B cell (primary cell): ENCODE measurements at regions of chr7 and their contacts with region 1.

Region 1: GRCh38 chr7:139075031-139075652 is 34.4 kb downstream of the ZC3HAV1 start:
- DNase-seq: peak; percentile 84
- ATAC-seq: peak; percentile 86
- H3K4me3 ChIP-seq: no peak overlapping the region
- H3K4me3 Mint-ChIP-seq: no peak overlapping the region
- H3K27ac ChIP-seq: peak overlapping the region; percentile 15 to 85
- H3K27ac Mint-ChIP-seq: peak overlapping the region; percentile 15
- H3K4me1 ChIP-seq: peaks cover 4 to 7% of the 10 kb centered on the region in 2 donors
- H3K4me1 Mint-ChIP-seq: peaks cover 17% of the 10 kb centered on the region
- H3K27me3 ChIP-seq: no peaks in the 10 kb centered on the region
- H3K27me3 Mint-ChIP-seq: no peaks in the 10 kb centered on the region
- CTCF ChIP-seq: peak; percentile 82

Region 2: DNA sequence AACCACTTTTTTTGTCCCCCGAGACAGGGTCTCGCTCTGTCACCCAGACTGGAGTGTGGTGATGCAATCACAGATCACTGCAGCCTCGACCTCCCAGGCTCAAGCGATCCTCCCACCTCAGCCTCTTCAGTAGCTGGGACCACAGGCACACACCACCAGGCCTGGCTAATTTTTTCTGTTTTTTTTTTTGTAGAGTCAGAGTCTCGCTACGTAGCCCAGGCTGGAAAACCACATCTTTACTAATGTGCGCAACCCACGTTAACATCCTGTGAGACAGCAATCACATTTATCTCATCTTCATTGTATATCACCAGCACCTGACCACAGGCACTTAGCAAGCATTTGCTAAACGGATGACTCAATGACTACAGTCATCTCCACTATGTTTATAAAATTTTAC is 199.3 kb before region 1 on chr7:
- CTCF ChIA-PET with region 1: no interaction called
- POLR2A ChIA-PET with region 1: no interaction called
- intact Hi-C with region 1: no loop called
- DNase-seq: no peak
- ATAC-seq: no peak
- H3K4me3 ChIP-seq: no peak overlapping the region
- H3K4me3 Mint-ChIP-seq: no peak overlapping the region
- H3K27ac ChIP-seq: no peak overlapping the region
- H3K27ac Mint-ChIP-seq: no peak overlapping the region
- H3K4me1 ChIP-seq: no peaks in the 10 kb centered on the region
- H3K4me1 Mint-ChIP-seq: no peaks in the 10 kb centered on the region
- H3K27me3 ChIP-seq: no peaks in the 10 kb centered on the region
- H3K27me3 Mint-ChIP-seq: no peaks in the 10 kb centered on the region
- CTCF ChIP-seq: no peak

Region 3: GRCh38 chr7:138886501-138886917 is 188.6 kb before region 1 on chr7:
- CTCF ChIA-PET with region 1: interaction called, 17 read pairs
- POLR2A ChIA-PET with region 1: no interaction called
- intact Hi-C with region 1: no loop called
- DNase-seq: peak; percentile 74
- ATAC-seq: peak; percentile 81
- H3K4me3 ChIP-seq: no peak overlapping the region
- H3K4me3 Mint-ChIP-seq: no peak overlapping the region
- H3K27ac ChIP-seq: no peak overlapping the region
- H3K27ac Mint-ChIP-seq: peak overlapping the region; percentile 22
- H3K4me1 ChIP-seq: peaks cover 0 to 4% of the 10 kb centered on the region in 2 donors
- H3K4me1 Mint-ChIP-seq: peaks cover 5% of the 10 kb centered on the region
- H3K27me3 ChIP-seq: no peaks in the 10 kb centered on the region
- H3K27me3 Mint-ChIP-seq: peaks cover 2% of the 10 kb centered on the region
- CTCF ChIP-seq: peak; percentile 75

Region 4: GRCh38 chr7:139058943-139059342 is 16.2 kb before region 1 on chr7:
- CTCF ChIA-PET with region 1: interaction called, 24 read pairs
- POLR2A ChIA-PET with region 1: no interaction called
- intact Hi-C with region 1: no loop called
- DNase-seq: no peak
- ATAC-seq: no peak
- H3K4me3 ChIP-seq: no peak overlapping the region
- H3K4me3 Mint-ChIP-seq: no peak overlapping the region
- H3K27ac ChIP-seq: no peak overlapping the region
- H3K27ac Mint-ChIP-seq: peak overlapping the region; percentile 22
- H3K4me1 ChIP-seq: no peaks in the 10 kb centered on the region
- H3K4me1 Mint-ChIP-seq: peaks cover 4% of the 10 kb centered on the region
- H3K27me3 ChIP-seq: no peaks in the 10 kb centered on the region
- H3K27me3 Mint-ChIP-seq: no peaks in the 10 kb centered on the region
- CTCF ChIP-seq: no peak

Region 5: GRCh38 chr7:139095194-139095659 is 20.1 kb after region 1 on chr7:
- CTCF ChIA-PET with region 1: interaction called, 40 read pairs
- POLR2A ChIA-PET with region 1: no interaction called
- intact Hi-C with region 1: no loop called
- DNase-seq: peak; percentile 93
- ATAC-seq: peak; percentile 97
- H3K4me3 ChIP-seq: peak overlapping the region; percentile 14 to 54 (median 35)
- H3K4me3 Mint-ChIP-seq: peak overlapping the region; percentile 83
- H3K27ac ChIP-seq: peak overlapping the region; percentile 75 to 98
- H3K27ac Mint-ChIP-seq: peak overlapping the region; percentile 91
- H3K4me1 ChIP-seq: peaks cover 66 to 67% of the 10 kb centered on the region in 2 donors
- H3K4me1 Mint-ChIP-seq: peaks cover 74% of the 10 kb centered on the region
- H3K27me3 ChIP-seq: no peaks in the 10 kb centered on the region
- H3K27me3 Mint-ChIP-seq: no peaks in the 10 kb centered on the region
- CTCF ChIP-seq: peak; percentile 31

Region 6: GRCh38 chr7:139109188-139109982 is 34.2 kb after region 1 on chr7 and contains the start of gene ZC3HAV1:
- CTCF ChIA-PET with region 1: interaction called, 14 read pairs
- POLR2A ChIA-PET with region 1: no interaction called
- intact Hi-C with region 1: loop called (anchors 1 kb)
- DNase-seq: peak; percentile 94
- ATAC-seq: peak; percentile 78
- H3K4me3 ChIP-seq: peak within 1 kb of the TSS; percentile 85 to 98 (median 95)
- H3K4me3 Mint-ChIP-seq: peak within 1 kb of the TSS; percentile 88
- H3K27ac ChIP-seq: peak within 1 kb of the TSS; percentile 90 to 96
- H3K27ac Mint-ChIP-seq: peak within 1 kb of the TSS; percentile 99
- H3K4me1 ChIP-seq: peaks cover 18 to 26% of the 10 kb centered on the region in 2 donors
- H3K4me1 Mint-ChIP-seq: peaks cover 34% of the 10 kb centered on the region
- H3K27me3 ChIP-seq: no peaks in the 10 kb centered on the region
- H3K27me3 Mint-ChIP-seq: no peaks in the 10 kb centered on the region
- CTCF ChIP-seq: no peak
- total RNA-seq, gene ZC3HAV1: 101 TPM in 2 replicates

Region 7: GRCh38 chr7:139124084-139124914 is 49.2 kb after region 1 on chr7:
- CTCF ChIA-PET with region 1: interaction called, 38 read pairs
- POLR2A ChIA-PET with region 1: interaction called, 3 read pairs
- intact Hi-C with region 1: loop called (anchors 1 kb)
- DNase-seq: no peak
- ATAC-seq: peak; percentile 31
- H3K4me3 ChIP-seq: no peak overlapping the region
- H3K4me3 Mint-ChIP-seq: no peak overlapping the region
- H3K27ac ChIP-seq: no peak overlapping the region
- H3K27ac Mint-ChIP-seq: no peak overlapping the region
- H3K4me1 ChIP-seq: peaks cover 21 to 28% of the 10 kb centered on the region in 2 donors
- H3K4me1 Mint-ChIP-seq: peaks cover 38% of the 10 kb centered on the region
- H3K27me3 ChIP-seq: no peaks in the 10 kb centered on the region
- H3K27me3 Mint-ChIP-seq: no peaks in the 10 kb centered on the region
- CTCF ChIP-seq: no peak

Region 8: GRCh38 chr7:139242741-139243281 is 167.7 kb after region 1 on chr7:
- CTCF ChIA-PET with region 1: no interaction called
- POLR2A ChIA-PET with region 1: no interaction called
- intact Hi-C with region 1: no loop called
- DNase-seq: no peak
- ATAC-seq: no peak
- H3K4me3 ChIP-seq: no peak overlapping the region
- H3K4me3 Mint-ChIP-seq: no peak overlapping the region
- H3K27ac ChIP-seq: no peak overlapping the region
- H3K27ac Mint-ChIP-seq: no peak overlapping the region
- H3K4me1 ChIP-seq: no peaks in the 10 kb centered on the region
- H3K4me1 Mint-ChIP-seq: no peaks in the 10 kb centered on the region
- H3K27me3 ChIP-seq: no peaks in the 10 kb centered on the region
- H3K27me3 Mint-ChIP-seq: no peaks in the 10 kb centered on the region
- CTCF ChIP-seq: no peak

Region 9: DNA sequence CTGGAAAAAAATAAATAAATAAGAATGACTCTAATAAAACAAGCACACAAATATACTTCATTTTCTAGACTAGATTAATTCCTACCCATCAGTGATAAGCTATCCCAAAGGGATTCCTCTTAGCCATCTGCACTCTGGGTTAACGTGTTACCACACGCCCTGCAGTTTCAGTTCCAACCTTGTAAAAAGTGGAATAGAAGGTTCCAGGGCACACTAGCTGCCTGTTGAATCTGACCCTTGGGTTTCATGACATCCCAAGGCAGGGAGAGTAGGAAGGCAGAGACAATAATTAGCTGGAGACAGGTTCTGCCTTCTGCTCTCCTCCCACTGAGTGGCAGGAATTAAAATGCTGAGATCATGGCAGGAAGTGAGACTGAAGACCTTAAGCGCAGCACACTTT is 1289.7 kb after region 1 on chr7:
- CTCF ChIA-PET with region 1: no interaction called
- POLR2A ChIA-PET with region 1: interaction called, 17 read pairs
- intact Hi-C with region 1: no loop called
- DNase-seq: no peak
- ATAC-seq: no peak
- H3K4me3 ChIP-seq: no peak overlapping the region
- H3K4me3 Mint-ChIP-seq: no peak overlapping the region
- H3K27ac ChIP-seq: no peak overlapping the region
- H3K27ac Mint-ChIP-seq: no peak overlapping the region
- H3K4me1 ChIP-seq: no peaks in the 10 kb centered on the region
- H3K4me1 Mint-ChIP-seq: no peaks in the 10 kb centered on the region
- H3K27me3 ChIP-seq: no peaks in the 10 kb centered on the region
- H3K27me3 Mint-ChIP-seq: no peaks in the 10 kb centered on the region
- CTCF ChIP-seq: no peak